Panc1 (cell line): ENCODE measurements at regions of chr1 and their contacts with region 1.

Region 1: GRCh38 chr1:209692745-209693504 is 11.7 kb upstream of the HSD11B1 start:
- DNase-seq: peak; percentile 52
- ATAC-seq: peak; percentile 74
- H3K4me3 ChIP-seq: no peak overlapping the region
- H3K27ac ChIP-seq: no peak overlapping the region
- H3K4me1 ChIP-seq: no peaks in the 10 kb centered on the region
- H3K27me3 ChIP-seq: no peaks in the 10 kb centered on the region
- CTCF ChIP-seq: peak; percentile 91

Region 2: DNA sequence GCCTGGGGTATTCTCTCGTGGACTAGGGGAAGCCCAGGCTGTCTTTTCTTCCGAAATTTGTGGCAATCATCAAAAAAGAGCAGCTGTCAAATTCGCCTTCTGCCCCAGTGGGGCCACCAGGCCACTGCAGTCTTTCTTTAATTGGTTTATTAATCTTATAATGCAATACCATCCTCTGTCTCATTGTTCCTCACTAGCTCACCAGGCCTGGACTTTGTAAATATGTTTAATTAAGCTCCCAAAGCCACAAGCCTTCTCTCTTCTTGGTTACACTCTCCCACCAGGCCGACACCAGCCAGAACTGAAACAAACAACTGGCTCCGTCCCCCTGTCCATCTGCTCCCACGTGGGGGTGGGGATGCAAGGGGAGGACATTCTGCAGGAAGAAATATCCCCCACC is 131.4 kb before region 1 on chr1:
- CTCF ChIA-PET with region 1: no interaction called
- POLR2A ChIA-PET with region 1: no interaction called
- in situ Hi-C with region 1: no loop called
- intact Hi-C with region 1: no loop called
- DNase-seq: no peak
- ATAC-seq: no peak
- H3K4me3 ChIP-seq: no peak overlapping the region
- H3K27ac ChIP-seq: no peak overlapping the region
- H3K4me1 ChIP-seq: no peaks in the 10 kb centered on the region
- H3K27me3 ChIP-seq: no peaks in the 10 kb centered on the region
- CTCF ChIP-seq: no peak

Region 3: GRCh38 chr1:209576798-209577197 is 116.1 kb before region 1 on chr1:
- CTCF ChIA-PET with region 1: no interaction called
- POLR2A ChIA-PET with region 1: no interaction called
- in situ Hi-C with region 1: no loop called
- intact Hi-C with region 1: loop called (anchors 2 kb)
- DNase-seq: peak; percentile 63
- ATAC-seq: peak; percentile 99
- H3K4me3 ChIP-seq: no peak overlapping the region
- H3K27ac ChIP-seq: no peak overlapping the region
- H3K4me1 ChIP-seq: no peaks in the 10 kb centered on the region
- H3K27me3 ChIP-seq: 0 out of 2 replicates have a peak, but pooled peaks cover under 1% of the 10 kb centered on the region
- CTCF ChIP-seq: peak; percentile 90

Region 4: GRCh38 chr1:209601809-209602657 is 90.9 kb before region 1 on chr1:
- CTCF ChIA-PET with region 1: no interaction called
- POLR2A ChIA-PET with region 1: no interaction called
- in situ Hi-C with region 1: no loop called
- intact Hi-C with region 1: loop called (anchors 1 kb)
- DNase-seq: peak; percentile 35
- ATAC-seq: peak; percentile 97
- H3K4me3 ChIP-seq: no peak overlapping the region
- H3K27ac ChIP-seq: no peak overlapping the region
- H3K4me1 ChIP-seq: no peaks in the 10 kb centered on the region
- H3K27me3 ChIP-seq: peaks cover 4% of the 10 kb centered on the region; the same call in 1 of the 2 replicates
- CTCF ChIP-seq: peak; percentile 76

Region 5: DNA sequence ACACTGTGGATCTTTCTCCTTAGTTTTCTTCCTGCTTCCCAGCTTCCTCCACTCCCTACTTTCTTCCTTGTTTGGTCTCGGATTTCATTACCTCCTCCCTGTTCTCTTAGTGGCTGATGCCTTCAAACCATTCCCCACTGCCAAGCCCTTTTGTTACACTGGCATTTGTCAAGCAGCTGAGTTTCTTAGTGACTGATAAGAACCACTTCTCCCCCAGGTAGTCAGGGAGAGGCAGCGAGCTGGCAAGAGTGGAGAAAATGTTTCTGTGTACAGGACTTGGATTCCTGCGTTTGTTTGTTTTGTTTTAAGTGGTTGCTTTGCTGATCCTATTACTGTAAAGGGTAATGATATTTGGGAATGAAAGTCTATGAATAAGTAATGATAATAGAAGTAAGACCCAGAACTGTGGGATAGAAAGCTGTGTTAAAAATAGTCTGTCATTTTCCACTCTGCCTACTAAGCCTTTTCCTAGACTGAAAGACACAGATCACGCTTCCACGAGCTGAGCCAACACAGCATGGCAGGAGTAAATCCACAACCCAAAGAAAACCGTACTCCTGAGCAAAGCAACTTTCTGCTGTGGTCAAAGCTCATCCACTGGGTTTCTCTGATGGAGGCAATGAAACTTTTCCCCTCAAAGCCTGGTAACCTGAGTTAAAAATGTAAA is 529.5 kb after region 1 on chr1:
- CTCF ChIA-PET with region 1: no interaction called
- POLR2A ChIA-PET with region 1: no interaction called
- in situ Hi-C with region 1: no loop called
- intact Hi-C with region 1: no loop called
- DNase-seq: no peak
- ATAC-seq: no peak
- H3K4me3 ChIP-seq: no peak overlapping the region
- H3K27ac ChIP-seq: no peak overlapping the region
- H3K4me1 ChIP-seq: no peaks in the 10 kb centered on the region
- H3K27me3 ChIP-seq: peaks cover 13% of the 10 kb centered on the region
- CTCF ChIP-seq: no peak